H1 (cell line): ENCODE measurements at regions of chr3 and their contacts with region 1.

Region 1: GRCh38 chr3:18363338-18363737 is 61.8 kb downstream of the SATB1 start:
- DNase-seq: no peak
- H3K4me3 ChIP-seq: no peak overlapping the region
- H3K27ac ChIP-seq: no peak overlapping the region
- H3K4me1 ChIP-seq: peaks cover 0 to 5% (median 1%) of the 10 kb centered on the region in 4 experiments; a peak in 1 of 7 replicates
- H3K27me3 ChIP-seq: no peaks in the 10 kb centered on the region
- CTCF ChIP-seq: no peak
- EP300 ChIP-seq: no peak
- POLR2A ChIP-seq: no peak
- RAD21 ChIP-seq: no peak

Region 2: GRCh38 chr3:18351823-18352744 is 11.3 kb before region 1 on chr3:
- CTCF ChIA-PET with region 1: interaction called, 10 read pairs
- POLR2A ChIA-PET with region 1: interaction called, 4 read pairs
- DNase-seq: no peak
- H3K4me3 ChIP-seq: no peak overlapping the region
- H3K27ac ChIP-seq: no peak overlapping the region
- H3K4me1 ChIP-seq: peaks cover 0 to 26% (median 5%) of the 10 kb centered on the region in 4 experiments; a peak in 4 of 7 replicates
- H3K27me3 ChIP-seq: no peaks in the 10 kb centered on the region
- CTCF ChIP-seq: no peak
- EP300 ChIP-seq: no peak
- POLR2A ChIP-seq: no peak
- RAD21 ChIP-seq: no peak